Activated T-helper 1 cell treated with anti-CD3 and anti-CD28 coated beads, Interleukin-12 subunit alpha, Interleukin-12 subunit beta, Interleukin-2, Interleukin-4 antibody, amounts not matched to agents 30 ng/mL and 10 ng/mL and 1 ng/mL, durations not matched to agents 14 hours and 24 hours and 36 hours (primary cell): ENCODE measurements at regions of chr16 and their contacts with region 1.

Region 1: GRCh38 chr16:27867122-27868110 is 196.1 kb downstream of the GSG1L start:
- DNase-seq: peak; percentile 45
- H3K4me3 Mint-ChIP-seq: no peak overlapping the region
- H3K27ac Mint-ChIP-seq: no peak overlapping the region
- H3K4me1 Mint-ChIP-seq: peaks cover 5% of the 10 kb centered on the region
- H3K27me3 Mint-ChIP-seq: peaks cover 2% of the 10 kb centered on the region

Region 2: GRCh38 chr16:27639561-27640276 is 227.7 kb before region 1 on chr16:
- intact Hi-C with region 1: loop called (anchors 1 kb)
- DNase-seq: no peak
- H3K4me3 Mint-ChIP-seq: no peak overlapping the region
- H3K27ac Mint-ChIP-seq: no peak overlapping the region
- H3K4me1 Mint-ChIP-seq: no peaks in the 10 kb centered on the region
- H3K27me3 Mint-ChIP-seq: peaks cover 2% of the 10 kb centered on the region